ENCODE measurements at regions of chr6 and their contacts with region 1.

Region 1: GRCh38 chr6:125153391-125154117 is at the start of gene TPD52L1:
- DNase-seq: peak; percentile 92
- total RNA-seq, gene TPD52L1: 41.4 to 51.7 TPM

Region 2: DNA sequence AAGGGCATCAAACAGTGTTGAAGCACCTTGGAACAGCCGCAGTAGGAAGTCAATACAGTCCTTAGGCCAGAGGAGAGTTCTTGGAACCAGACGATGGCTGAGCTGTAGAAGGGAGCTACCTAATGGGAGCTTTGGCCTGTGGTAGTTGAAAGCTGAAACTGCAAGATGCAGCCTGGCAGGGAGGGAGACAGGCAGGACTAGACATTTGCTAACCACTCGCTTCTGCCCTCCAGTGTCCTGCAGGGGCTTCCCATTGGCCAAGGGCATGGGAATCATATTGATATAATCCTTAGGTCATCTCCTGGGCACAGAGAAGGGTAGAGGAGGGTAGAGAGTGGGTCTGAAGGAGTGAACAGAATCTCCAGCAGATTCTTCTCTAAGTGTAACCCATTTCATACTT is 60.4 kb after region 1 on chr6:
- intact Hi-C with region 1: loop called in 1 of 2 experiments (anchors 2 kb)
- DNase-seq: no peak

Region 3: DNA sequence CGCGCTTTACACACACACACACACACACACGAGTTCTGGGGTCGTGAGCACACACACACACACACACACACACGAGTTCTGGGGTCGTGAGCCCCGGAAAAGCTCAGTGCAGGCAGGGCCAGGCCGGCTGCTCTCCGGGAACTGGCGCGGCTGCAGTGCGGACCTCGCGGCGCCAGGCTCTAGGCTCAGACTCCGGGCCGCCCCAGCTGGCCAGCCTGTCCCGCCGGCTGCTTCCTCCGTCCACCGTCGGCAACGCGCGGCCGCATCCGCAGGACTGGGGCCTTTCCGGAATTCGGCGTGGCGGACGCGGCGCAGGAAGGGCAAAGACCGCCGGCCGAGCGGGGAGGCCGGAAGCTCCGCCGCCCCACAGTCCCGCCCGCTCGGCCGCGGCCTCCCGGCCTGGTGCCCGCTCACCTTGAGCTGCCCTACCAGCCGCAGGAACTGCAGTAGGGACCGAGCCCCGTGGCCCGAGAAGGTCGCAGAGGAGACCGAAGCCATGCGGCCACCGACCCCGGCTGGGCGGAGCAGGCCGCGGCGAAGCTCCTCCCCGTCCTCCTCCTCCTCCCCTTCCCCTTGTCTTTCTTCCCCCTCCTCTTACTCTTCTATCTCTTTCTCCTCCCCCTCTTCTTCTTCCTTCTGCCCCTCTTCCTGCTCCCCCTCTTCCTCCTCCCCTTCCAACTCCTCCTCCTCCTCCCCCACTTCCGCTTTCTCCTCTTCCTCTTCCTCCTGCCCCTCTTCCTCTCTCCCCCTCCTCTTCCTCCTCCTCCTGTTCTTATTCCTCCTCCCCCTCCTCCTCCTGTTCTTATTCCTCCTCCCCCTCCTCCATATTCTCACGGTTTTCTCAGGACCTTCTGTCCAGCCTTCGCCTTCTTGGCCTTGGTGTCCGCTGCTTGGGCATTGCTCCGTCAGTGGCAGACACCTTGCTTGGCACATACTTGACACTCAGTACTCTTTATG is 148.2 kb after region 1 on chr6 and contains the start of gene HDDC2:
- intact Hi-C with region 1: loop called in 1 of 2 experiments (anchors 5 kb)
- DNase-seq: peak; percentile 94
- total RNA-seq, gene HDDC2: 47.8 to 53.2 TPM